Naive thymus-derived CD8-positive, alpha-beta T cell (primary cell): ENCODE measurements at regions of chr19 and their contacts with region 1.

Region 1: DNA sequence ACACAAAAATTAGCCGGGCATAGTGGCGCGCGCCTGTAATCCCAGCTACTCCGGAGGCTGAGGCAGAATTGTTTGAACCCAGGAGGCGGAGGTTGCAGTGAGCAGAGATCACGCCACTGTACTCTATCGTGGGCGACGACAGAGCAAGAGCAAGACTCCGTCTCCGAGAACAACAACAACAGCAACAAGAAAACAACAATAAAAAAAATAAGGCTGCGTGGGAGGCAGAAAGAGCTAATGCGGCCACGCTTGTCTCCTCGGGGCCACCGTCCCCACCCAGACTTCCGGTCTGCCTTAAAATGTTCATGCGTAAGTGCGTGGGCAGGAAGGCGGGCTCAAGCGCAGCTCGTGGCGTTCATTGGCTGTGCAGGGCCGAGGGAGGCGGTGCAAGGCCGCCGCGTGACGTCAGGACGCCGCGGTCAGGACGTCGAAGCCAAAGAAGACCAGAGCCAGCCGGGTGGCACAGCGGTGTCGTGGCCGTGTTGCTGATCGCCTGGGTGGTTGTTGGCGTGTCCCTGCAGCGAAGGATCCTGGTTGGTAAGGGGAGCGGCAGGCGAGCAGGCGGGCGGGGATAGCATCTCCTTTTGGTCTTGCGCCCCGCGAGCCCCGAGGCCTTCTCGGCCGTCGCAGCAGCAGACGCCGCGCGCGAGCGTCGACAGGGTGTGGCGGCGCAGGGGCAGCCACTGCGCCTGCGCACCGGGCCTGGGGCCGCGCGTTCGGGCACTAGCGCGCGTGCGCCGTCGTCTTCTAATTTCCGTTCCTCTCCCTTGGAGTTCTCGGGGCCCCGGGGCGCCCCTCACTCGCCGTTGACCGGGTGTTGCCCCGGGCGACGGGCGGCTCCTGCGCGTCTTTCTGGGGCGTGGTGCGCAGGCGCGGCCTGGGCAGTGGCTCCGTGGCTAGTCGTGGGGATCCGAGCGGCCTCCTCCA is at the start of gene LENG8:
- DNase-seq: peak; percentile 95 to 99 (median 98)
- ATAC-seq: peak; percentile 88 to 92
- H3K4me3 Mint-ChIP-seq: peak within 1 kb of the TSS; percentile 92 to 100 (median 98)
- H3K27ac Mint-ChIP-seq: peak within 1 kb of the TSS; percentile 99 to 100 (median 100)
- H3K4me1 Mint-ChIP-seq: peaks cover 28 to 68% (median 57%) of the 10 kb centered on the region in 4 donors
- H3K27me3 Mint-ChIP-seq: peaks cover 0 to 3% (median 0%) of the 10 kb centered on the region in 5 donors
- polyA plus RNA-seq, gene LENG8: 4.5 to 8.6 (median 6.5) TPM

Region 2: DNA sequence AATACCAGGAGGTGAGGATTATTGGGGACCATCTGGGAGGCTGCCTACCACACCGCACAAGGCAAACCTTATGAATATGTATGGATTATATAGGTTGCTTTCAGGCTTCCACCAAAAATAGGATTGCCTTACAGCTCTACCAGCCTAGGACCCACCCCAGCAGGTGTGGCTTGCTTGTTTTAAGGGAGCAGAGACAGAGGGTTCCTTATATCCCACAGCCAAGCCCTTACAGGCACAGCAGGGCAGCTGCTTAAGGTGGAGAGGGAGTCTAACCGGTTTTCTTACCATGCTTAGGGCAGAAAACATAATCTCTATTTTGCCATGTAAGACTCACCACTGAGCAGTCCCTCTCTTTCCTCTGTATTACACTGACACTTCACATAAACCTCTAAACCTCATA is 49.8 kb before region 1 on chr19:
- POLR2A ChIA-PET with region 1: no interaction called
- DNase-seq: no peak
- ATAC-seq: no peak
- H3K4me3 Mint-ChIP-seq: no peak overlapping the region
- H3K27ac Mint-ChIP-seq: no peak overlapping the region
- H3K4me1 Mint-ChIP-seq: peaks cover 0 to 1% (median under 1%) of the 10 kb centered on the region in 4 donors
- H3K27me3 Mint-ChIP-seq: peaks cover 0 to 9% (median 4%) of the 10 kb centered on the region in 5 donors

Region 3: GRCh38 chr19:54463531-54464043 is 14.6 kb after region 1 on chr19 and contains the start of gene LENG9:
- POLR2A ChIA-PET with region 1: interaction called, 72 read pairs
- DNase-seq: peak; percentile 83 to 96 (median 89)
- ATAC-seq: peak; percentile 56 to 66
- H3K4me3 Mint-ChIP-seq: peak within 1 kb of the TSS; percentile 85 to 97 (median 89)
- H3K27ac Mint-ChIP-seq: peak within 1 kb of the TSS; percentile 90 to 98 (median 96)
- H3K4me1 Mint-ChIP-seq: peaks cover 19 to 35% (median 30%) of the 10 kb centered on the region in 4 donors
- H3K27me3 Mint-ChIP-seq: peaks cover 0 to 6% (median 3%) of the 10 kb centered on the region in 5 donors
- polyA plus RNA-seq, gene LENG9: 0.22 to 0.36 TPM in 2 of 3 donors, not detected in the other

Region 4: GRCh38 chr19:54485851-54486250 is 36.8 kb after region 1 on chr19:
- POLR2A ChIA-PET with region 1: no interaction called
- DNase-seq: no peak
- ATAC-seq: no peak
- H3K4me3 Mint-ChIP-seq: no peak overlapping the region
- H3K27ac Mint-ChIP-seq: no peak overlapping the region
- H3K4me1 Mint-ChIP-seq: peaks cover 2 to 17% (median 12%) of the 10 kb centered on the region in 4 donors
- H3K27me3 Mint-ChIP-seq: peaks cover 11 to 37% (median 17%) of the 10 kb centered on the region in 5 donors

Region 5: GRCh38 chr19:54532528-54532927 is 83.5 kb after region 1 on chr19:
- POLR2A ChIA-PET with region 1: no interaction called
- DNase-seq: peak in 2 of 10 donors; percentile 7 to 31
- ATAC-seq: no peak
- H3K4me3 Mint-ChIP-seq: peak overlapping the region in 3 of 10 donors; percentile 51 to 77 (median 72)
- H3K27ac Mint-ChIP-seq: peak overlapping the region in 3 of 10 donors; percentile 1 to 78 (median 40)
- H3K4me1 Mint-ChIP-seq: peaks cover 0 to 32% (median 3%) of the 10 kb centered on the region in 4 donors
- H3K27me3 Mint-ChIP-seq: peaks cover 32 to 72% (median 47%) of the 10 kb centered on the region in 5 donors